ENCODE measurements at regions of chr16 and their contacts with region 1.

Region 1: DNA sequence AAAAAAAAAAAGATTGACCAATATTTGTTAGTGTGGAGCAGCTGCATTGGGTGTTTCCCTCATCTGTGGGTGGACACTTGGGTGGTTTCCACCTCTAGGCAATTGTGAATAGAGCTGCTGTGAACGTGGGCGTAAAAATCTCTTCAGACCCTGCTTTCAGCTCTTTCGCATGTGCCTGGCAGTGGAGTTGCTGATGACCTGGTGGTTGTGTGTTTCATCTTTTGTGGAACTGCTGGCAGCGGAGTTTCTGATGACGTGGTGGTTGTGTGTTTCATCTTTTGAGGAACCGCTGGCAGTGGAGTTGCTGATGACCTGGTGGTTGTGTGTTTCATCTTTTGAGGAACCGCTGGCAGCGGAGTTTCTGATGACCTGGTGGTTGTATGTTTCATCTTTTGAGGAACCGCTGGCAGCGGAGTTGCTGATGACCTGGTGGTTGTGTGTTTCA is 21.4 kb downstream of the ZC3H18 start:
- DNase-seq: peak in 2 of 10 donors; percentile 44 to 56
- H3K4me3 ChIP-seq: no peak overlapping the region
- H3K27ac ChIP-seq: peak overlapping the region in 3 of 59 donors; percentile 17 to 32 (median 26)
- H3K27me3 ChIP-seq: no peaks in the 10 kb centered on the region
- CTCF ChIP-seq: no peak

Region 2: GRCh38 chr16:88713568-88714419 is 122.2 kb after region 1 on chr16:
- intact Hi-C with region 1: loop called in 1 of 2 experiments (anchors 10 kb)
- DNase-seq: no peak
- H3K4me3 ChIP-seq: no peak overlapping the region
- H3K27ac ChIP-seq: no peak overlapping the region
- H3K27me3 ChIP-seq: no peaks in the 10 kb centered on the region
- CTCF ChIP-seq: no peak